CD8-positive, alpha-beta T cell (primary cell): ENCODE measurements at regions of chr10 and their contacts with region 1.

Region 1: DNA sequence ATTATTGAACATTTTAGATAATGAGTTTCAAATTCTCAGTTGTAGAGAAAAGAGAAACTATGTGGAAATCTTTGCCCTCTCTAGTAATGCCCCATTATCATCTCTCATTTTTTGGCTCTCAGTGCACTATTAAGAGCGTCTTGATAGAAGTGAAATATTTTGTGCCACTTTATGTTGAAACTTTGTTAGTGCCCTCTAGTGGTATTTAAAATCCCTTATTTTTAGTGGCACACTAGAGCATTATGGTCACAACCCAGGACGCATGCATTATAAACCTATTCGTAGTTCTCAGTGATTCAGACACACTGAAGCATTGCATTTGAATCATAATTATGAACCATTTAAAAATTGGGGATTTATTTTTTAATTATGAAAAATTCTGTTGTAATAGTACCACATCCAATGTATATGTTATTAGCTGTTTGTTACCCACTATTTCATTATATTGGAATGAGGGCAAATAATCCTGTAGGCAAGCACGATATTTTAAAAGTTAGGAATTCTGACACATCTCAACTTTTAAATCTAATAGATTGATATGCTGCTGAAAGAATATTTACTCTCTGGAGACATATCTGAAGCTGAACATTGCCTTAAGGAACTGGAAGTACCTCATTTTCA is 21.9 kb downstream of the PDCD4 start:
- DNase-seq: peak in 2 of 9 experiments; percentile 63 to 76
- ATAC-seq: peak; percentile 65
- H3K4me3 ChIP-seq: no peak overlapping the region
- H3K4me3 Mint-ChIP-seq: no peak overlapping the region
- H3K27ac ChIP-seq: no peak overlapping the region
- H3K27ac Mint-ChIP-seq: peak overlapping the region; percentile 47
- H3K4me1 ChIP-seq: peaks cover 9% of the 10 kb centered on the region
- H3K4me1 Mint-ChIP-seq: peaks cover 61% of the 10 kb centered on the region
- H3K27me3 ChIP-seq: no peaks in the 10 kb centered on the region
- H3K27me3 Mint-ChIP-seq: no peaks in the 10 kb centered on the region
- CTCF ChIP-seq: peak; percentile 45

Region 2: GRCh38 chr10:110576220-110576619 is 317.4 kb before region 1 on chr10:
- CTCF ChIA-PET with region 1: no interaction called
- POLR2A ChIA-PET with region 1: no interaction called
- intact Hi-C with region 1: loop called in 1 of 2 experiments (anchors 10 kb)
- DNase-seq: no peak
- ATAC-seq: no peak
- H3K4me3 ChIP-seq: no peak overlapping the region
- H3K4me3 Mint-ChIP-seq: no peak overlapping the region
- H3K27ac ChIP-seq: no peak overlapping the region
- H3K27ac Mint-ChIP-seq: no peak overlapping the region
- H3K4me1 ChIP-seq: peaks cover 16% of the 10 kb centered on the region
- H3K4me1 Mint-ChIP-seq: peaks cover 38% of the 10 kb centered on the region
- H3K27me3 ChIP-seq: no peaks in the 10 kb centered on the region
- H3K27me3 Mint-ChIP-seq: no peaks in the 10 kb centered on the region
- CTCF ChIP-seq: no peak

Region 3: DNA sequence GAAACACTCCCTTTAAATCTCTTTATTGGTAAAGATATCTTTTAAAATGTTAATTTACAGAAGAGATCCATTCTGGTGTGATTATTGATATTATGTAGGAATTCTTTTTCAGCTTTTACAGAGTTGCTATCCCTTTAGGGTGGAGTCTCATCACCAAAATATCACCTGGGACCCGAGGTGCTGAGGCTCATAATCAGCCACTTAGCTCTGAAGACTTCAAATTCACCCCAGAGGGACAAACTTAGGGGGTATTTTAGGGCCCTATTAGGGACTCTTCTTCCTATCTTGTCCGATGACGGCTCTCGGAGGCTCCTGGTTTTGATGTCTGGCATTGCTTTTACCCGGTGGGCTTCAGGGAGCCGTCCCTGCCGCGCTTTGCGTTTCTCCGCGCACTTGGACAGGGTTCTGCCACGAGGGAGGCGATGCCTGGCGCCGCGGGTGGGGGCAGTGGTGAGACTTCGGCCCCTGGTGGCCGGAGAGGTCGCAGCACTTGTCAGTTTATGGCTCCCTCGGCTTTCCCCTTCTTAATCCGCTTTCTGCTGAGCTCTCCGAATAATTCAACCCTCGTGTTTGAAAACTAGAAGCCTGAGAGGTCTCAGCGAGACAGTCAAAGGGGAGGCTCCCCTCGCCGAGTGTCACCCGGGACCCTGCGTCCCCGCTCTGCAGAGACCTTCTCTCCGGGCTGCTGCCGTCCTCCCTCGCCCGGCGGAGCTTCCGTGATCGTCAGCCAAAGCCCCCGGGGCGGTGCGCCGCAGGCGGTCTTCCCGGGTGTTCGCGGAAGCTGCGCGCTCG is 221.7 kb before region 1 on chr10:
- CTCF ChIA-PET with region 1: interaction called, 4 read pairs
- POLR2A ChIA-PET with region 1: no interaction called
- intact Hi-C with region 1: loop called in 1 of 2 experiments (anchors 1 kb)
- DNase-seq: peak; percentile 36 to 82 (median 69)
- ATAC-seq: peak; percentile 85
- H3K4me3 ChIP-seq: peak overlapping the region; percentile 66 to 76
- H3K4me3 Mint-ChIP-seq: peak overlapping the region; percentile 91
- H3K27ac ChIP-seq: peak overlapping the region; percentile 55 to 69
- H3K27ac Mint-ChIP-seq: peak overlapping the region; percentile 91
- H3K4me1 ChIP-seq: peaks cover 4% of the 10 kb centered on the region
- H3K4me1 Mint-ChIP-seq: peaks cover 4% of the 10 kb centered on the region
- H3K27me3 ChIP-seq: no peaks in the 10 kb centered on the region
- H3K27me3 Mint-ChIP-seq: no peaks in the 10 kb centered on the region
- CTCF ChIP-seq: peak; percentile 58

Region 4: DNA sequence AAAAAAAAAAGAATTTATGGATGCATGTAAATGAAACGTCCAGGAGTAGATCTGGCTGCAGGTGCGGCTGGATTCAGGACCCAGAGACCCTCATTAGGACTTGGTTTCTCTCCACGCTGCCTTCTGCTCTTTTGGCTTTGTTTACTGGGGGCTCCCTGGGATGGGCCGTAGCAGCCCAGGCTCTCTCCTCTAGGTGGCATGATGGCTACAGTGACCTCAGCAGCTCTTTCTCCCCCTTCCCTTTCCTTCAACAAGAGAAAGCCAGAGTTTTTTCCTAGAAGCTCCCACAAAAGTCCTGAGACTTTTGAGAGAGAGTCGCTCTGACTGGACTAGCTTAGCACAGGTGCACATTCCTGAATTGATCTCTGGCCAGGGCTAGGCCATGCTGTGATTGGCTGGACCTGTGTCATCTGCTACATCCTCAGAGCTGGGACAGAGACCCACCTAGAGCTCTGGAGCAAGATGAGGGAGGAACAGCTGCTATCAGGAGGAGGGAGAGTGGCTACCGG is 89.8 kb before region 1 on chr10:
- CTCF ChIA-PET with region 1: interaction called, 32 read pairs
- POLR2A ChIA-PET with region 1: interaction called, 3 read pairs
- intact Hi-C with region 1: loop called (anchors 1 to 5 kb)
- DNase-seq: peak in 7 of 9 experiments; percentile 22 to 79 (median 54)
- ATAC-seq: peak; percentile 51
- H3K4me3 ChIP-seq: no peak overlapping the region
- H3K4me3 Mint-ChIP-seq: peak overlapping the region; percentile 59
- H3K27ac ChIP-seq: peak overlapping the region in 1 of 2 experiments; percentile 44
- H3K27ac Mint-ChIP-seq: peak overlapping the region; percentile 89
- H3K4me1 ChIP-seq: peaks cover 32% of the 10 kb centered on the region
- H3K4me1 Mint-ChIP-seq: peaks cover 40% of the 10 kb centered on the region
- H3K27me3 ChIP-seq: no peaks in the 10 kb centered on the region
- H3K27me3 Mint-ChIP-seq: no peaks in the 10 kb centered on the region
- CTCF ChIP-seq: peak; percentile 58

Region 5: GRCh38 chr10:110834629-110835301 is 58.9 kb before region 1 on chr10:
- CTCF ChIA-PET with region 1: interaction called, 14 read pairs
- POLR2A ChIA-PET with region 1: interaction called, 3 read pairs
- intact Hi-C with region 1: no loop called
- DNase-seq: peak in 7 of 9 experiments; percentile 22 to 77 (median 55)
- ATAC-seq: peak; percentile 89
- H3K4me3 ChIP-seq: no peak overlapping the region
- H3K4me3 Mint-ChIP-seq: peak overlapping the region; percentile 53
- H3K27ac ChIP-seq: peak overlapping the region; percentile 38 to 41
- H3K27ac Mint-ChIP-seq: peak overlapping the region; percentile 97
- H3K4me1 ChIP-seq: peaks cover 37% of the 10 kb centered on the region
- H3K4me1 Mint-ChIP-seq: peaks cover 43% of the 10 kb centered on the region
- H3K27me3 ChIP-seq: no peaks in the 10 kb centered on the region
- H3K27me3 Mint-ChIP-seq: no peaks in the 10 kb centered on the region
- CTCF ChIP-seq: no peak

Region 6: DNA sequence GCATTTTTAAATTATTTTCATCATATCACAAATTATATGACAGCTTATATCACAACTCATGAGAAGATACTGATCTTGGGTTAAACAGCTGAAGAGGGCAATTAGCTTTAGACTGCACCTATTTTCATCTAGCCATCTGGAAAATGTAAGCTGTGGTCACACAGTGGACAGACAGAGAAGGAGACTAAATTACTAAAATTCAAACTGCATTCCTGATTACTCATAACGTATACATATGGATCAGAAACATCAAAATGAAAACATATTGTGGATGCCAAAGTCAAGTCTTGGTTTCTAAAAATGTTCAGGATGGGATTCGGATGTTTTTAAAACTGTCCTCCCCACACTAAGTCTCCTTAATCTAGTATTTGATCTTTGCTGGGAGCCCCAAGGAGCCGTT is 18.7 kb after region 1 on chr10:
- CTCF ChIA-PET with region 1: interaction called, 12 read pairs
- POLR2A ChIA-PET with region 1: no interaction called
- intact Hi-C with region 1: no loop called
- DNase-seq: no peak
- ATAC-seq: no peak
- H3K4me3 ChIP-seq: no peak overlapping the region
- H3K4me3 Mint-ChIP-seq: no peak overlapping the region
- H3K27ac ChIP-seq: no peak overlapping the region
- H3K27ac Mint-ChIP-seq: no peak overlapping the region
- H3K4me1 ChIP-seq: no peaks in the 10 kb centered on the region
- H3K4me1 Mint-ChIP-seq: peaks cover 44% of the 10 kb centered on the region
- H3K27me3 ChIP-seq: no peaks in the 10 kb centered on the region
- H3K27me3 Mint-ChIP-seq: no peaks in the 10 kb centered on the region
- CTCF ChIP-seq: no peak